Activated CD4-positive, alpha-beta T cell treated with anti-CD3 and anti-CD28 coated beads, Interleukin-2, amount 10 ng/mL, durations not matched to agents 7 days and 5 days (primary cell): ENCODE measurements at regions of chr15 and their contacts with region 1.

Region 1: DNA sequence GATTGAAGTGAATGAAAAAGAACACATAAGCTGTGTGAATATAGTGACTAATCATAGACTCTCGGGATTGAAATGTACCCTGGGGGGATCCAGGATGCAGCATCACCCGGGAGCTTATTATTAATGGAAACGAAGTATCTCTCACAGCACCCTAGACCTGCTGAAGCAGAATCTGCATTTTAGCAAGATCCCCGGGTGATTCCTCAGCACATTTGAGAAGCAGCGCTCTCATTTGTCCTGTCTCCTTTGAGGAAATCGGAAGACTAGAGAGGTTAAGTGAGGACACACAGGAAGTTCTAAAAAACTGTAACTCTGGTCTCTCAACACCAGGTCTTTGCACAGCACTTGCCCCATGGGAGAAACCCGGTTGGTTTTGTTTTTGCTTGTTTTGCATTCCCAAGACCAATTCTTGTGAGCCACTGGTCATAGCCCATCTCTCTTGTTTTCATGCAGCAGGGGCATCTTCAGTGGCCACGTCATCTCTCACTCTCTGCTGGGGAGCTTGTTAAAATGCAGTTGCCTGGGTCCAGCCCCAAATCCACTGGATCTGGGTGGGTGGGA is 30.2 kb downstream of the ZNF710 start:
- DNase-seq: peak; percentile 31
- H3K4me3 Mint-ChIP-seq: no peak overlapping the region
- H3K27ac Mint-ChIP-seq: peak overlapping the region; percentile 82
- H3K4me1 Mint-ChIP-seq: peaks cover 65% of the 10 kb centered on the region
- H3K27me3 Mint-ChIP-seq: no peaks in the 10 kb centered on the region

Region 2: DNA sequence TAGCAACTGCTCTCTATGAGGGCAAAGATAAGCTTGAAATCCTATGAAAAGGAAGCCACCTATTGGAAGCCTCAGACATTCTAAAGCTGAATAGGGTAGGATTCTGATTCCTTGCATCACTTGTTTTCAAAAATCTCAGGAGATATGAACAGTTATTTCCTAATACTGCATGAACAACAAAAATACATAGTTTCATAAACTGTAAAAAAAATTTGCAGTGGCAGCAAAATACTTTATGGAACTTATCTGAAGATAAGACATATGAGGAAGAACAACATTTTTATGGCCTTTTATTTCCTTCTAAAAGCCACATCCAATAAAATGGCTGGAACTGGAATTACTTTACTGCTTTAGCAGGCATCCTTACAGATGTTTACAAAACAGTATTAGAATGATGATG is 167.4 kb before region 1 on chr15:
- CTCF ChIA-PET with region 1: no interaction called
- POLR2A ChIA-PET with region 1: no interaction called
- DNase-seq: no peak
- H3K4me3 Mint-ChIP-seq: no peak overlapping the region
- H3K27ac Mint-ChIP-seq: no peak overlapping the region
- H3K4me1 Mint-ChIP-seq: peaks cover 11% of the 10 kb centered on the region
- H3K27me3 Mint-ChIP-seq: no peaks in the 10 kb centered on the region

Region 3: GRCh38 chr15:90020021-90020735 is 11.1 kb before region 1 on chr15:
- CTCF ChIA-PET with region 1: interaction called, 10 read pairs
- POLR2A ChIA-PET with region 1: no interaction called
- DNase-seq: no peak
- H3K4me3 Mint-ChIP-seq: no peak overlapping the region
- H3K27ac Mint-ChIP-seq: peak overlapping the region; percentile 13
- H3K4me1 Mint-ChIP-seq: peaks cover 62% of the 10 kb centered on the region
- H3K27me3 Mint-ChIP-seq: no peaks in the 10 kb centered on the region